Panc1 (cell line): ENCODE measurements at regions of chr6 and their contacts with region 1.

Region 1: DNA sequence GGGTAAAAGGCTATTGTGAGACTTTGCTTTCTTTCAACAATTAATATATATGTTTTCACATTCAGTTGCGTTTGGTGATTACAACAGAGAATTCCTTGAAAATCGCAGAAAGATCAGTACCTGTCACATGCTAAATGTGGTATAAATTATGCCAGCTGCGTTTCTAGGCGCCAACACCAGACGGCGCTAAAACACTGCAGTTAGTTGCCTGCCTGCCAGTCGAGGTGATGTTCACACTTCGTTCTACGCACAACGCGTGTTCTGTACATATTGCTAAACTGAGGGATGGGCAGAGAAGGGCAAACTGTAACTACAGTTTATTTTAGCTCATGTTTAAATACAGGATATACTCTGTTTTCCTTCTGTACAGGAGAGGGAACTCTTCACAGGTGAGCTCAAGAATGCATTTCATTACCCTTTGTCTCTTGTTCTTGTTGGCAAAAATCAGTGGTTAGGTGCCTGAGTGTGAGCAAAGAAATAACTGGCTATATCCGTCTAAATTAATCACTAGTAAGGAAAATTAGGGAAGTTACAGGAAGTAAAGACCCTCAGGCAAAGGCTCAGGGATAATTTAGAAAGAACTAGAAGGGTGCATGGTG is 100.1 kb upstream of the RGS17 start:
- DNase-seq: peak; percentile 43
- ATAC-seq: peak; percentile 82
- H3K4me3 ChIP-seq: no peak overlapping the region
- H3K27ac ChIP-seq: no peak overlapping the region
- H3K4me1 ChIP-seq: no peaks in the 10 kb centered on the region
- H3K27me3 ChIP-seq: no peaks in the 10 kb centered on the region
- CTCF ChIP-seq: peak; percentile 97

Region 2: GRCh38 chr6:153032255-153032882 is 198.8 kb before region 1 on chr6:
- CTCF ChIA-PET with region 1: no interaction called
- POLR2A ChIA-PET with region 1: no interaction called
- in situ Hi-C with region 1: no loop called
- intact Hi-C with region 1: loop called (anchors 10 kb)
- DNase-seq: no peak
- ATAC-seq: no peak; the same call in 1 of the 2 replicates
- H3K4me3 ChIP-seq: no peak overlapping the region
- H3K27ac ChIP-seq: no peak overlapping the region
- H3K4me1 ChIP-seq: no peaks in the 10 kb centered on the region; the same call in 1 of the 2 replicates
- H3K27me3 ChIP-seq: no peaks in the 10 kb centered on the region
- CTCF ChIP-seq: peak; percentile 56; the same call in 1 of the 2 replicates

Region 3: DNA sequence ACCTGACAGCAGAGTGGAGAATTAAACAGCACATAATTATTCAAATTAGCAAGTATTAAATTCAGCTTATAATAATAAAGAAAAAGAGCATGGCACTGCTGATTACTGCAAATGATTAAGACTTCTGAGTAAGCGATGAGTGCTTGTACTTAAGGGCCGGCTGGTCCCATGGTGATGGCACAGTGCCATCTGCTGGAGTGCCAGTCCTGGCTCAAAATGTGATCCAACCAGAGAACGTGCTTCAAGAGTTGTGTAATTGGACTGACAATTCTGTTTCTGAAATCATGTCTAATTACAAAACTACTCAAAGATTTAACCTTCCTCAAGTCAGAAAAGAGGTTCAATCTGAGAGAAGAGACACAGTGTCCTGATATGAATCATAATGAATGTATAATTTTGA is 81.5 kb after region 1 on chr6:
- CTCF ChIA-PET with region 1: no interaction called
- POLR2A ChIA-PET with region 1: no interaction called
- in situ Hi-C with region 1: no loop called
- intact Hi-C with region 1: loop called (anchors 5 kb)
- DNase-seq: peak; percentile 52
- ATAC-seq: peak; percentile 89
- H3K4me3 ChIP-seq: no peak overlapping the region
- H3K27ac ChIP-seq: no peak overlapping the region
- H3K4me1 ChIP-seq: no peaks in the 10 kb centered on the region
- H3K27me3 ChIP-seq: no peaks in the 10 kb centered on the region
- CTCF ChIP-seq: peak; percentile 82

Region 4: DNA sequence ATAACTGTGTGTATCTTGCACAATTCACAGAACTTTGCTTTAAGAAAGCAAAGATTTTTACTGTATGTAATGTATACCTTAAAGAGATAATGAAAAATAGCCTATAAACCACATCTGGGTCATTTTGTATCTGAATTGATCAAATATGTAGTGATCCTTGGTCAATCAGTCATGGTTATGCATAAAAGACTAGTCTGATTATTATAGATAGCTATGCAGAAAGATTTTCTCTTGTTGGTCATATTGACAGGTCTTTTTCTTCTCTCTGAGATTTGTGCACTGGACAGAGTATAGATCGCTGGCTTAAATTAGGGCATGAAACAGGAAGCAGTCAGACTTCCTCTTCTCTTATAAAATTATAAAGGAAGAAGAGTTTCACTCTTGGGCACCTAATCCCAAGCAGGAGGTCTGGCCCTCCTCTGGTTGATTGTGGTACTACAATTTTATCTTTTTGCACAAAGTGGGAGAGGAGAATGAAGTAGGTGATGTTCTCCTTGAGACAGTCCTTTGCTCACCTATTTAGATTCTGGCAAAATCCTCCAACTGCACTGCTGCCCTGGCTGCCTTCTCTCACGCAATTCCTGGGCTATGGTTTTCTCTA is 280.8 kb after region 1 on chr6:
- CTCF ChIA-PET with region 1: no interaction called
- POLR2A ChIA-PET with region 1: no interaction called
- in situ Hi-C with region 1: no loop called
- intact Hi-C with region 1: loop called (anchors 5 kb)
- DNase-seq: peak; percentile 22
- ATAC-seq: 0 out of 2 replicates have a peak, but pooled peaks have one; percentile 58
- H3K4me3 ChIP-seq: no peak overlapping the region
- H3K27ac ChIP-seq: no peak overlapping the region
- H3K4me1 ChIP-seq: no peaks in the 10 kb centered on the region; the same call in 1 of the 2 replicates
- H3K27me3 ChIP-seq: no peaks in the 10 kb centered on the region
- CTCF ChIP-seq: peak; percentile 75

Region 5: GRCh38 chr6:153525998-153526397 is 294.9 kb after region 1 on chr6:
- CTCF ChIA-PET with region 1: no interaction called
- POLR2A ChIA-PET with region 1: no interaction called
- in situ Hi-C with region 1: no loop called
- intact Hi-C with region 1: no loop called
- DNase-seq: no peak
- ATAC-seq: no peak
- H3K4me3 ChIP-seq: no peak overlapping the region
- H3K27ac ChIP-seq: no peak overlapping the region
- H3K4me1 ChIP-seq: no peaks in the 10 kb centered on the region
- H3K27me3 ChIP-seq: no peaks in the 10 kb centered on the region
- CTCF ChIP-seq: no peak

Region 6: DNA sequence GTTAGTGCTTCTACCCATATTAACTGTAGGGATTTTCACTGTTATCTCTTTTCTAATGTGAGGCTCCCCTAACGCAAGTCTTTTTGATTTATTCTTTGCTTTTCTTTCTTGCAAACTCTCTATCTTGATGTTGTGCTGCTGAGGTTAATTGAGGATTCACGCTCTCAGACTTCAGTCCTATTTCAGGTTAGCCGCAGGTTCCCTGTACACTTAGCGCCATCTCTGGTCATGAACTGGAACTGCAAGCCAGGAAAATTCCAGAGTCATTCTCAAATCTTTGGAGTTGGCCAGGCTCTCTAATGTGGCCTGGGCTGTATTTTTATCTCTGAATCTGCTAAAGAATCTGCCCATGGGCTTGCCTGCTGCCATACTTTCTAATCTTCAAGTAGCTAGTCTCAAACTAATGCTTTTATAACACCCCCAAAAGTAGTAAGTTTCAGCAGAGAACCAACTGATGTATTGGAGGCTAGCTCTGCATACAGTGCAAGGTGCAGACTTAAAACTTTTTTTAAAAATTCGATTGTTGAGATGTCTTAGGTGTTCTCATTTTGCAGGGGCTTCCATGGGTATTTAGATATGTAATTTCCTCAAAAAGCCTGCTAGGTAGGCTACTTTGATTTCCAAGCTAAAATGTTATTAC is 716.8 kb after region 1 on chr6:
- CTCF ChIA-PET with region 1: no interaction called
- POLR2A ChIA-PET with region 1: no interaction called
- in situ Hi-C with region 1: no loop called
- intact Hi-C with region 1: loop called (anchors 5 kb)
- DNase-seq: peak; percentile 39
- ATAC-seq: peak; percentile 72
- H3K4me3 ChIP-seq: no peak overlapping the region
- H3K27ac ChIP-seq: no peak overlapping the region
- H3K4me1 ChIP-seq: no peaks in the 10 kb centered on the region
- H3K27me3 ChIP-seq: no peaks in the 10 kb centered on the region
- CTCF ChIP-seq: peak; percentile 95